ENCODE measurements at regions of chr1 and their contacts with region 1.

Region 1: DNA sequence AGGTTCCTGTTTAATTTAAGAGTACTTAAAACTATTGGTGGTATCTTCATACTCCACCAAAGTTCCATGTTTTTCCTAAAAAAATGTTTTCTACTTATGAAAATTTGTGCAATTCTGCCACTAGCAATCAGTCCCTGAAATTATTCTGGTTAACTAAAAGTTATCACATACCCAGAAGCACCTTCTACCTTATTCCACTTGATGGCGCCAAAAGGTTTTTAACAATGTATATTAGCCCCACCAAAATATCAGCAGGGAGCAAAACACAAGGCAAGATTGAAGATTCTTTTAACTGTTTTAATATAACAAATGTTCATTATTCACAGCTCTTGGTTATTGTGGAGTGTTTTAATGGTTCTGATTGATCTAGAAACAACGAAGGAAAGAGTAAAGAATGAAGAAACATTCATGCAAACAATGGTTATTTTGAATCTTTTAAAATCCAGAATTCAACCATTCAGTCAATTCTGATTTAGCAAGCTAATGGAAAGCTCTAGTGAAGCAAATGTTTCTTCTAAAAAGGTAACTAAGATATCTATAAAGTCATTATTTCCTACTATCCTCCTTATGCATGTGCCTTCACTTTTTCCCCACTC is 67.2 kb downstream of the TTLL7 start:
- H3K4me3 Mint-ChIP-seq: no peak overlapping the region
- H3K27ac Mint-ChIP-seq: no peak overlapping the region
- H3K4me1 Mint-ChIP-seq: peaks cover 5% of the 10 kb centered on the region
- H3K27me3 Mint-ChIP-seq: no peaks in the 10 kb centered on the region

Region 2: GRCh38 chr1:84020151-84020550 is 88.4 kb after region 1 on chr1:
- intact Hi-C with region 1: no loop called
- H3K4me3 Mint-ChIP-seq: no peak overlapping the region
- H3K27ac Mint-ChIP-seq: no peak overlapping the region
- H3K4me1 Mint-ChIP-seq: no peaks in the 10 kb centered on the region
- H3K27me3 Mint-ChIP-seq: no peaks in the 10 kb centered on the region

Region 3: DNA sequence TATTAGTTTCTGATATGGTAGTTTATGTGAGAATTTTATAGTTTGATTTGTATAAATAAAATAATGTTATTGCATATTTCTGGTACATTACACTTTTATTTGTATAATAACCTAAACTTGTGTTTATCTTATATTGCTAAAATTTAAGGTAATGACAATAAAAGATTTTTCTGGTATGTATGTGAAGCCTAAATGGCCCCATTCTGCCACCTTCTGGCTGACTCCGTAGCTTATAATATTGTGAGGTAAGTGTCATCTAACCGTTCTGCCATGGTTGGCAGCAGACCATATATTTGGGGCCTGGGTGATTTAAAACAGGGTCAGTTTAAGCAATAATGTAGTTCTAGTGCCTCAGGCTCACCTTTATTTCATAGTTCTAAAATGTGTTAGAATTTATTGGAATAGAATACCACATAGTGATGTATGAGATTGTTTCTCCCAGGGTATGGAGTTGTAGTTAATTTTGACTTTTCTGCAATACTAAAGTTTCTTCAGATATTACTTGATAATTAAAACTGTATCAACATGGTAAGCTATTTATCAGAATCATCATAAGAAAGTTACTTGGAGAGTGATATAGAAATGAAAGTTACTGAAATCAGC is 191.1 kb after region 1 on chr1:
- intact Hi-C with region 1: loop called (anchors 1 kb)
- H3K4me3 Mint-ChIP-seq: no peak overlapping the region
- H3K27ac Mint-ChIP-seq: no peak overlapping the region
- H3K4me1 Mint-ChIP-seq: no peaks in the 10 kb centered on the region
- H3K27me3 Mint-ChIP-seq: no peaks in the 10 kb centered on the region

Region 4: GRCh38 chr1:84936116-84936810 is 1004.5 kb after region 1 on chr1:
- intact Hi-C with region 1: loop called (anchors 10 kb)
- H3K4me3 Mint-ChIP-seq: no peak overlapping the region
- H3K27ac Mint-ChIP-seq: no peak overlapping the region
- H3K4me1 Mint-ChIP-seq: no peaks in the 10 kb centered on the region
- H3K27me3 Mint-ChIP-seq: no peaks in the 10 kb centered on the region

Measured in dendritic cell treated with granulocyte-macrophage colony-stimulating factor and Interleukin-4, amounts not matched to agents 40 ng/mL and 50 ng/mL, for 4 days (primary cell).